Endothelial cell of umbilical vein (primary cell): ENCODE measurements at regions of chr3 and their contacts with region 1.

Region 1: GRCh38 chr3:50192689-50193141 is 1.3 kb downstream of the GNAT1 start:
- DNase-seq: peak; percentile 69
- H3K4me3 ChIP-seq: no peak overlapping the region
- H3K27ac ChIP-seq: no peak overlapping the region
- H3K4me1 ChIP-seq: peaks cover 5% of the 10 kb centered on the region
- H3K27me3 ChIP-seq: peaks cover 11 to 13% of the 10 kb centered on the region in 2 experiments
- CTCF ChIP-seq: peak; percentile 87 to 92
- POLR2A ChIP-seq: no peak

Region 2: GRCh38 chr3:50121416-50122032 is 71.2 kb before region 1 on chr3:
- CTCF ChIA-PET with region 1: interaction called, 177 read pairs
- POLR2A ChIA-PET with region 1: interaction called, 4 read pairs
- dilution Hi-C with region 1: loop called (anchors 10 kb)
- intact Hi-C with region 1: loop called (anchors 1 kb)
- DNase-seq: peak; percentile 80
- H3K4me3 ChIP-seq: no peak overlapping the region
- H3K27ac ChIP-seq: no peak overlapping the region
- H3K4me1 ChIP-seq: peaks cover 7% of the 10 kb centered on the region
- H3K27me3 ChIP-seq: no peaks in the 10 kb centered on the region
- CTCF ChIP-seq: peak; percentile 75 to 79
- POLR2A ChIP-seq: peak; percentile 77

Region 3: GRCh38 chr3:50170689-50171088 is 22.0 kb before region 1 on chr3:
- CTCF ChIA-PET with region 1: interaction called, 3 read pairs
- POLR2A ChIA-PET with region 1: no interaction called
- dilution Hi-C with region 1: no loop called
- intact Hi-C with region 1: loop called (anchors 2 kb)
- DNase-seq: peak; percentile 90
- H3K4me3 ChIP-seq: no peak overlapping the region
- H3K27ac ChIP-seq: peak overlapping the region; percentile 99
- H3K4me1 ChIP-seq: peaks cover 57% of the 10 kb centered on the region
- H3K27me3 ChIP-seq: no peaks in the 10 kb centered on the region
- CTCF ChIP-seq: no peak
- POLR2A ChIP-seq: peak; percentile 60

Region 4: DNA sequence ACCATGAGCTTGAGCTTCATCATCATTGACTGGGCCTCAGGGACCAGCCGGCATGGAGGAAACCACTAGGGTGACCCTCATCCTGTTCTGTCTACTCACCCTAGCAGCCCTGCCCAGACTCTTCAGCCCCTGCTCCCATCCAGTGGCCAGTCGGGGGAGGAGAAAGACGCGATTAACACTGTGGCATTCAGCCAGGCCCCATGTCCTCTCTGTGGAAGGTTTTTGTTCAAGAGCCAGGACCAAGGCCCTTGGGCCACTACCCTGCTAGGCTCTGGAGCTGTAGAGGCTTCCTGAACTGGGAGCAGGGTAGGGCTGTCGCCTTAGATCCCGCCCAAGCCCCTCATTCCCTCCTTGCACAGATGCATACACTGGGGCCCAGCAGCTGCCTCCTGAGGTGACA is 27.4 kb after region 1 on chr3:
- CTCF ChIA-PET with region 1: interaction called, 314 read pairs
- POLR2A ChIA-PET with region 1: interaction called, 7 read pairs
- dilution Hi-C with region 1: no loop called
- intact Hi-C with region 1: no loop called
- DNase-seq: no peak
- H3K4me3 ChIP-seq: no peak overlapping the region
- H3K27ac ChIP-seq: no peak overlapping the region
- H3K4me1 ChIP-seq: no peaks in the 10 kb centered on the region
- H3K27me3 ChIP-seq: no peaks in the 10 kb centered on the region
- CTCF ChIP-seq: no peak
- POLR2A ChIP-seq: no peak

Region 5: GRCh38 chr3:50245831-50246516 is 53.3 kb after region 1 on chr3:
- CTCF ChIA-PET with region 1: interaction called, 34 read pairs
- POLR2A ChIA-PET with region 1: no interaction called
- dilution Hi-C with region 1: no loop called
- intact Hi-C with region 1: no loop called
- DNase-seq: peak; percentile 90
- H3K4me3 ChIP-seq: no peak overlapping the region
- H3K27ac ChIP-seq: peak overlapping the region; percentile 86
- H3K4me1 ChIP-seq: peaks cover 92% of the 10 kb centered on the region
- H3K27me3 ChIP-seq: no peaks in the 10 kb centered on the region
- CTCF ChIP-seq: peak; percentile 98 to 99
- POLR2A ChIP-seq: peak; percentile 6

Region 6: DNA sequence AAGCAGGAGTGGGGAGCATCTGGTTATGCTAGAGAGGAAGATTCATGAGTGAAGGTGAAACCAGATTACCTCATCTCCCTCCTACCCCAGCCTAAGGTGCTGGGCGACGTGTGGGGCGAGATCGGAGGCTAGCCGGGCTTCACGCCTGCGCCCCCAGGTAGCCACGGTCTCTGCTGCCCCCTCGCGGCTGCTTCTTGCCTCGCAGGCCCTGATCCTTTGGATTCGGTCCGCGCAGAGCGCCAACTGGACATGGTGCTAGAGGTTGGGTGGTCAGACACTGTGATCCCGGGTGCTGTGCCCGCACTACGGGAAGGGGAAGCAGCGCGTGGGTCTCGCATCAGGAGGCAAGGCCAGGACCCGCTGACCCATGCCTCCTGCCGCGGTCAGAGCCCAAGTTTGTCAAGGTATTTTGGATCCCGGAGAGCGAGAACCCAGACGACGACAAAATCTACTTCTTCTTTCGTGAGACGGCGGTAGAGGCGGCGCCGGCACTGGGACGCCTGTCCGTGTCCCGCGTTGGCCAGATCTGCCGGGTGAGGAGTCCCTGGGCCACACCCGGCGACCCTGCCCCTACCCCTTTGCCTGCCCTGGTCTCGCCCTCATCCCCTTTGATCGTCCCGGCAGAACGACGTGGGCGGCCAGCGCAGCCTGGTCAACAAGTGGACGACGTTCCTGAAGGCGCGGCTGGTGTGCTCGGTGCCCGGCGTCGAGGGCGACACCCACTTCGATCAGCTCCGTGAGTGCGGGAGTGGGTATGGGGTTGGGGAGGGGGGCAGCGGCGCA is 80.4 kb after region 1 on chr3:
- CTCF ChIA-PET with region 1: interaction called, 53 read pairs
- POLR2A ChIA-PET with region 1: no interaction called
- dilution Hi-C with region 1: no loop called
- intact Hi-C with region 1: loop called (anchors 1 kb)
- DNase-seq: peak; percentile 84
- H3K4me3 ChIP-seq: peak overlapping the region in 2 of 3 experiments; percentile 13 to 14
- H3K27ac ChIP-seq: no peak overlapping the region
- H3K4me1 ChIP-seq: peaks cover 2% of the 10 kb centered on the region
- H3K27me3 ChIP-seq: peaks cover 18 to 24% of the 10 kb centered on the region in 2 experiments
- CTCF ChIP-seq: peak; percentile 93 to 98
- POLR2A ChIP-seq: no peak

Region 7: GRCh38 chr3:50616003-50616769 is 423.5 kb after region 1 on chr3:
- CTCF ChIA-PET with region 1: no interaction called
- POLR2A ChIA-PET with region 1: no interaction called
- dilution Hi-C with region 1: no loop called
- intact Hi-C with region 1: no loop called
- DNase-seq: peak; percentile 77
- H3K4me3 ChIP-seq: peak overlapping the region; percentile 71 to 83 (median 76)
- H3K27ac ChIP-seq: no peak overlapping the region
- H3K4me1 ChIP-seq: peaks cover 23% of the 10 kb centered on the region
- H3K27me3 ChIP-seq: no peaks in the 10 kb centered on the region
- CTCF ChIP-seq: peak; percentile 98 to 99
- POLR2A ChIP-seq: no peak